Mammary epithelial cell (primary cell): ENCODE measurements at regions of chr4 and their contacts with region 1.

Region 1: GRCh38 chr4:5142726-5143125 is 91.4 kb downstream of the STK32B start:
- DNase-seq: peak; percentile 12
- H3K4me3 ChIP-seq: no peak overlapping the region
- H3K27ac ChIP-seq: no peak overlapping the region
- H3K4me1 ChIP-seq: no peaks in the 10 kb centered on the region
- H3K27me3 ChIP-seq: no peaks in the 10 kb centered on the region
- CTCF ChIP-seq: peak; percentile 26 to 47

Region 2: GRCh38 chr4:4995103-4995907 is 147.4 kb before region 1 on chr4:
- CTCF ChIA-PET with region 1: no interaction called
- dilution Hi-C with region 1: no loop called
- in situ Hi-C with region 1: no loop called
- intact Hi-C with region 1: loop called (anchors 1 kb)
- DNase-seq: peak; percentile 42
- H3K4me3 ChIP-seq: no peak overlapping the region
- H3K27ac ChIP-seq: no peak overlapping the region
- H3K4me1 ChIP-seq: no peaks in the 10 kb centered on the region
- H3K27me3 ChIP-seq: peaks cover 2% of the 10 kb centered on the region
- CTCF ChIP-seq: peak; percentile 89 to 95